Motor neuron (in vitro differentiated cells): ENCODE measurements at regions of chr14 and their contacts with region 1.

Region 1: GRCh38 chr14:22386924-22387775 is 201.9 kb downstream of the DAD1 start:
- ATAC-seq: peak; percentile 6 to 72 (median 60)
- H3K4me3 ChIP-seq: no peak overlapping the region
- H3K27ac ChIP-seq: no peak overlapping the region
- H3K4me1 ChIP-seq: peaks cover 3 to 4% of the 10 kb centered on the region in 2 donors

Region 2: DNA sequence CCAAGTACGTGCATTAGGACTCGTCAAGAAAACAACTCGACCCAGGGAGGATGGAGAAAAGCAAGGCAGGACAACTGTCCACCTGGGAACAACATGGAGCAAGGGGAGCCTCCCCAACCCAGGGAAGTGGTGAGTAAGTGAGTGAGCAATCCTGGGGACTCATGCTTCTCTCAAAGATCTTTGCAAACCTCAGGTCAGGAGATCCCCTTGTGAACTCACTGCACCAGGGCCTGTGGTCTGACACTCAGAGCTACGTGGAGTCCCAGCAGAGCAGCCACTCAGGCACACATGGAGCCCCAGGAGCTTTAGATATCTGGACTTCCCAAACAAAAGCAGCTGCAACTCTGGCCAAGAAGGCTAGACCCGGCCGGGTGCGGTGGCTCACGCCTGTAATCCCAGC is 1219.1 kb before region 1 on chr14:
- in situ Hi-C with region 1: no loop called
- ATAC-seq: no peak
- H3K4me3 ChIP-seq: no peak overlapping the region
- H3K27ac ChIP-seq: no peak overlapping the region
- H3K4me1 ChIP-seq: no peaks in the 10 kb centered on the region

Region 3: GRCh38 chr14:22464422-22465142 is 77.4 kb after region 1 on chr14:
- in situ Hi-C with region 1: loop called in 1 of 9 experiments (anchors 10 kb)
- ATAC-seq: no peak
- H3K4me3 ChIP-seq: no peak overlapping the region
- H3K27ac ChIP-seq: no peak overlapping the region
- H3K4me1 ChIP-seq: peaks cover 0 to under 1% of the 10 kb centered on the region in 2 donors

Region 4: GRCh38 chr14:22472935-22473854 is 86.0 kb after region 1 on chr14:
- in situ Hi-C with region 1: loop called in 2 of 9 experiments (anchors 5 to 10 kb)
- ATAC-seq: peak in 6 of 8 experiments; percentile 35 to 72 (median 52)
- H3K4me3 ChIP-seq: no peak overlapping the region
- H3K27ac ChIP-seq: no peak overlapping the region
- H3K4me1 ChIP-seq: peaks cover 9 to 32% of the 10 kb centered on the region in 2 donors

Region 5: DNA sequence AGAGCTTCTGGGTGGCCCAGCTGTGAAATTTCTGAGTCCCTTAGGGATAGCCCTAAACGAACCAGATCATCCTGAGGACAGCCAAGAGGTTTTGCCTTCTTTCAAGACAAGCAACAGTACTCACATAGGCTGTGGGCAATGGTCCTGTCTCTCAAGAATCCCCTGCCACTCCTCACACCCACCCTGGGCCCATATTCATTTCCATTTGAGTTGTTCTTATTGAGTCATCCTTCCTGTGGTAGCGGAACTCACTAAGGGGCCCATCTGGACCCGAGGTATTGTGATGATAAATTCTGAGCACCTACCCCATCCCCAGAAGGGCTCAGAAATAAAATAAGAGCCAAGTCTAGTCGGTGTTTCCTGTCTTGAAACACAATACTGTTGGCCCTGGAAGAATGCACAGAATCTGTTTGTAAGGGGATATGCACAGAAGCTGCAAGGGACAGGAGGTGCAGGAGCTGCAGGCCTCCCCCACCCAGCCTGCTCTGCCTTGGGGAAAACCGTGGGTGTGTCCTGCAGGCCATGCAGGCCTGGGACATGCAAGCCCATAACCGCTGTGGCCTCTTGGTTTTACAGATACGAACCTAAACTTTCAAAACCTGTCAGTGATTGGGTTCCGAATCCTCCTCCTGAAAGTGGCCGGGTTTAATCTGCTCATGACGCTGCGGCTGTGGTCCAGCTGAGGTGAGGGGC is 163.0 kb after region 1 on chr14:
- in situ Hi-C with region 1: loop called in 1 of 9 experiments (anchors 10 kb)
- ATAC-seq: peak in 5 of 8 experiments; percentile 23 to 80 (median 54)
- H3K4me3 ChIP-seq: no peak overlapping the region
- H3K27ac ChIP-seq: no peak overlapping the region
- H3K4me1 ChIP-seq: peaks cover 21 to 32% of the 10 kb centered on the region in 2 donors

Region 6: GRCh38 chr14:22699801-22700564 is 312.8 kb after region 1 on chr14:
- in situ Hi-C with region 1: no loop called
- ATAC-seq: no peak
- H3K4me3 ChIP-seq: no peak overlapping the region
- H3K27ac ChIP-seq: no peak overlapping the region
- H3K4me1 ChIP-seq: no peaks in the 10 kb centered on the region

Region 7: DNA sequence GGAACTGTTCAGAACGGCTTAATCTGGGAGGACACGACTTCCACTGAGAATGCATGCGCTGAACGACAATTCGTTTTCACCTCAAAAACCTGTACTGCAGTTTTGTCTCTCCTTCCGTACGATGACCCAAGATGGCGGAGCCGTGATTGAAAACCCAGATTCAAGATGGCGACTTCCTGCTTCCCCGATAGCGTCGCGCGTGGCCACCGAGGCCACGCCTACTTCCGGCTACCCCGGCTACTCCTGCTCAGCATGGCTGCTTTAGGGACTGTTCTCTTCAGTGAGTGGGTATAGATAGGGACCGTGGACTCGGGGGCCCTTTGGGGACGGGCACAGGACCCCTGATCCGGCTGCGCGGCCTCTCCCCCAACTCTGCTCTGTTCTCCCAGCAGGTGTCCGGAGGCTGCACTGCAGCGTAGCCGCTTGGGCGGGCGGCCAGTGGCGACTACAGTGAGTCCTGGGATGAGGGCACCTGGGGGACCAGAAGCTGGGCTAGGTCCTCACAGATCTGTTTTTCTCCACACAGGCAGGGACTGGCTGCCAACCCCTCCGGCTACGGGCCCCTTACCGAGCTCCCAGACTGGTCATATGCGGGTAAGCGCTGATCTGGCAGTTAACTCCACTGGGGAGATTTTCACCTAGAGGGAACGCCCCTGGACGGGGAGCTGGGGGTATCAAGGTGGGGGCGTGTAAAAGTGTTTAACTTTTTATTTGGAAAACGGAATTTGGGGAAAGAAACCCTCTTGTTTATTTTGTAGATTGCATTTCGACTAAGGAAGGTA is 442.7 kb after region 1 on chr14 and contains the start of gene MRPL52:
- in situ Hi-C with region 1: loop called in 1 of 9 experiments (anchors 25 kb)
- ATAC-seq: peak; percentile 81 to 98 (median 97)
- H3K4me3 ChIP-seq: peak within 1 kb of the TSS; percentile 64 to 98 (median 93)
- H3K27ac ChIP-seq: peak within 1 kb of the TSS; percentile 61 to 75
- H3K4me1 ChIP-seq: peaks cover 6 to 8% of the 10 kb centered on the region in 2 donors
- total RNA-seq, gene MRPL52: 60.7 to 112 (median 87.1) TPM

Region 8: GRCh38 chr14:22872033-22872832 is 485.1 kb after region 1 on chr14:
- in situ Hi-C with region 1: loop called in 3 of 9 experiments (anchors 25 kb)
- ATAC-seq: peak; percentile 30 to 54 (median 50)
- H3K4me3 ChIP-seq: peak overlapping the region; percentile 31 to 88 (median 54)
- H3K27ac ChIP-seq: peak overlapping the region; percentile 13 to 16
- H3K4me1 ChIP-seq: peaks cover 0 to 5% of the 10 kb centered on the region in 2 donors